ENCODE measurements at regions of chr14 and their contacts with region 1.

Region 1: GRCh38 chr14:67704484-67705089 is 2.9 kb downstream of the RDH12 start:
- DNase-seq: no peak
- H3K4me3 ChIP-seq: no peak overlapping the region
- H3K27ac ChIP-seq: no peak overlapping the region
- H3K27me3 ChIP-seq: peaks cover 4% of the 10 kb centered on the region
- CTCF ChIP-seq: peak; percentile 77

Region 2: GRCh38 chr14:67387195-67387594 is 317.4 kb before region 1 on chr14:
- CTCF ChIA-PET with region 1: interaction called, 13 read pairs
- POLR2A ChIA-PET with region 1: no interaction called
- DNase-seq: no peak
- H3K4me3 ChIP-seq: no peak overlapping the region
- H3K27ac ChIP-seq: no peak overlapping the region
- H3K27me3 ChIP-seq: no peaks in the 10 kb centered on the region
- CTCF ChIP-seq: no peak

Region 3: GRCh38 chr14:67571272-67571850 is 133.2 kb before region 1 on chr14:
- CTCF ChIA-PET with region 1: interaction called, 26 read pairs
- POLR2A ChIA-PET with region 1: no interaction called
- DNase-seq: no peak
- H3K4me3 ChIP-seq: no peak overlapping the region
- H3K27ac ChIP-seq: no peak overlapping the region
- H3K27me3 ChIP-seq: peaks cover 24% of the 10 kb centered on the region
- CTCF ChIP-seq: peak; percentile 94

Region 4: DNA sequence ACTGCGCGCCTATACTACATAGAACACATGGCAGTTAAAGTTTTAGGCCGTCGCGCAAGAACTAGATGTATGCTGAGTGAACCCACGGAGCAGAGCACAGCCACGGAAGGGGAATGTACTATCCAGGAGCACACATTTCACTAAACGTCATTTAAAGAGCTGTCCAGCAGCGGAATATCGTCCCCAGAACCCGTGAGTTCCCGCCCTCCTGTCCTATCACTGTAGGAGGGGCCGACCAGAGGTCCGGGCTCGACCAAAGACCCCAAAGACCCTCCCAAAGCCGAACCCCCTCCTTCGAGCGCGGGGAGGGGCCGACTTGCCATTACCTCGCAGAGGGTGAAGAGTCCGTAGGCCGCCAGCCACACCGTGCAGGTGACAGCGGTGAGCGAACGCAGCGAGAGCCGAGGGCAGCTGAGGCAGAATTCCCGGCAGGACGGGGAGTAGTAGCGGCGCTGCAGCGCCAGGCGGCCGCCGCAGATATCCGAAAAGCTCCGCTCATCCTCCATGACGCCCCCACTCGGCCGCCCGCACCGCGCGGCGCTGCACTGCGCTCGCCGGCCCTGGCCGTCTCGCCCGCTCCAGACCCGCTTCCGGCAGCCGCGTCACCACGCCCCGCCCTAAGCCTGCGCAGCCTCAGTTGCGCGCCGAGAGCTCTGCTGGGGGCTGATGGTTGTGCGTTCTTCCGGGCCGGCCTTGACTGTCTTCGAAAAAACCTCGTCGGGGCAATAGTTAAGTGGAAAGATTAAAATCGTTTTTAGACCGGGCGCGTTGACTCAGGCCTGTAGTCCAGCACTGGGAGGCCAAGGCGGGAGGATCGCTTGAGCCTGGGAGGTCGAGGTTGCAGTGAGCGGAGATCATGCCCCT is 104.7 kb before region 1 on chr14 and contains the start of gene PIGH:
- CTCF ChIA-PET with region 1: interaction called, 35 read pairs
- POLR2A ChIA-PET with region 1: no interaction called
- DNase-seq: peak; percentile 46
- H3K4me3 ChIP-seq: peak within 1 kb of the TSS; percentile 83
- H3K27ac ChIP-seq: peak within 1 kb of the TSS; percentile 68
- H3K27me3 ChIP-seq: no peaks in the 10 kb centered on the region
- CTCF ChIP-seq: peak; percentile 56
- polyA plus RNA-seq, gene PIGH: 16.0 and 17.6 TPM in 2 replicates

Region 5: DNA sequence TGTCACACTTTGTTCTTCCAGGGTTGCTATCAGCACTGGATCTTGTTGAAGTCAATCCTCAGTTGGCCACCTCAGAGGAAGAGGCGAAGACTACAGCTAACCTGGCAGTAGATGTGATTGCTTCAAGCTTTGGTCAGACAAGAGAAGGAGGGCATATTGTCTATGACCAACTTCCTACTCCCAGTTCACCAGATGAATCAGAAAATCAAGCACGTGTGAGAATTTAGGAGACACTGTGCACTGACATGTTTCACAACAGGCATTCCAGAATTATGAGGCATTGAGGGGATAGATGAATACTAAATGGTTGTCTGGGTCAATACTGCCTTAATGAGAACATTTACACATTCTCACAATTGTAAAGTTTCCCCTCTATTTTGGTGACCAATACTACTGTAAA is 53.9 kb before region 1 on chr14:
- CTCF ChIA-PET with region 1: interaction called, 11 read pairs
- POLR2A ChIA-PET with region 1: no interaction called
- DNase-seq: no peak
- H3K4me3 ChIP-seq: no peak overlapping the region
- H3K27ac ChIP-seq: no peak overlapping the region
- H3K27me3 ChIP-seq: no peaks in the 10 kb centered on the region
- CTCF ChIP-seq: no peak

Region 6: DNA sequence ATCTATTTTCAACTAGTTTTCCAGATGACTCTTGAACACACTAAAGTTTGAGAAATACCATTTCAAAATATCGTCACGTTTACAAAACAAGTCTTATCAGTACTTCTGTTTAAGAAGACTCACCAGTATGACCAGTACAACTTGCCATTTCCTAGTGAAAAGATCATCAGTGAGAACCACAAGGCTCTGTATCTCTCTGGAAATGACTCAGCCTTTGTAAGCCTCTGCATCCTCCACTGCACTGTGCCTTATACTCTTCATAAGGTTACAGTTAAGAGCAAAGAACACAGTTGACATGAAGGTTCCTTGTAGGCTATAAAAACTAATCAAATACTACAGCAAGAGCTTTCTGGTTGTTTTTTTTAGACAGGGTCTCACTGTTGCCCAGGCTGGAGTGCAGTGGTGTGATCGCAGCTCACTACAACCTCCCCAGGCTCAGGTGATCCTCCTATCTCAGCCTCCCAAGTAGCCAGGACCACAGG is 24.4 kb before region 1 on chr14:
- CTCF ChIA-PET with region 1: interaction called, 16 read pairs
- POLR2A ChIA-PET with region 1: no interaction called
- DNase-seq: peak; percentile 59
- H3K4me3 ChIP-seq: no peak overlapping the region
- H3K27ac ChIP-seq: peak overlapping the region; percentile 73
- H3K27me3 ChIP-seq: no peaks in the 10 kb centered on the region
- CTCF ChIP-seq: no peak

Region 7: GRCh38 chr14:67759916-67760315 is 55.3 kb after region 1 on chr14:
- CTCF ChIA-PET with region 1: no interaction called
- POLR2A ChIA-PET with region 1: no interaction called
- DNase-seq: no peak
- H3K4me3 ChIP-seq: no peak overlapping the region
- H3K27ac ChIP-seq: no peak overlapping the region
- H3K27me3 ChIP-seq: no peaks in the 10 kb centered on the region
- CTCF ChIP-seq: no peak

Measured in AG04450 (cell line).